Activated CD4-positive, alpha-beta T cell treated with anti-CD3 and anti-CD28 coated beads, Interleukin-2, amount 10 ng/mL, durations not matched to agents 24 days and 14 days (primary cell): ENCODE measurements at regions of chr1 and their contacts with region 1.

Region 1: DNA sequence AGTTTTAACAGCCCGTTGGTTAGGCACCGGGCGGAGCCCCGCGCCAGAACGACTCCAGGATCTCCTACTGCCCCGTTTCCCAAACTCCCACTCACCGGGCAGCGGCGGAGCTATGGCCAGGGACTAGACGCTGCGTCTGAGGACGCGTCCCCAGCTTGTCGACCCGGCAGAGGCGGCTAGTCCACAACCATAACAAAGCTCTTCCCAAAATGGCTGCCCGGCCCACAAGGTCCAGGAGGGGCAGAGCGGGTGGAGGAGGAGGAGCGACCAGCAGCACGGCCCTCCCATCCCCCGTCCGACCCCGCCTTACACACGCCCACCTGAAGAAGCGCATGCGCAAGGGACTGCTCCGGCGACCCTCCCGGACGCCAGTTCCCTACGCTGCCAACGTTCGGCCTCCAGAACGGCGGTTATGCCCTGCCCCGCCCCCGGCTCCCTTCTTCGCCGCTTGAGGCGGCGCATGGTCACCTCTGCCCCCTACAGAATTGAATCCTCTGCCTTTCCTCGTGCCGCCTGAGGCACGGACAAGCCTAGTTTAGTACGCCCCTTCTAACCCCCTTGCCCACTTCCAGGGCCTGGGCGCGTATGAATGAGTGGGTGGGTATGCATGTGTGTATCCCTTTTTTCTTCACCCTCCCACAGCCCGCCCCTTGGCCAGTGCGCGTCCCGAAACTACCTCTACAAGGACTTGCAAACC is at the start of gene GPBP1L1:
- DNase-seq: peak; percentile 99
- H3K4me3 Mint-ChIP-seq: peak within 1 kb of the TSS; percentile 98
- H3K27ac Mint-ChIP-seq: peak within 1 kb of the TSS; percentile 97
- H3K4me1 Mint-ChIP-seq: peaks cover 31% of the 10 kb centered on the region
- H3K27me3 Mint-ChIP-seq: no peaks in the 10 kb centered on the region
- total RNA-seq, gene GPBP1L1: 101 and 104 TPM in 2 replicates

Region 2: GRCh38 chr1:44721485-44722361 is 964.7 kb before region 1 on chr1:
- intact Hi-C with region 1: loop called (anchors 5 kb)
- DNase-seq: peak; percentile 94
- H3K4me3 Mint-ChIP-seq: peak overlapping the region; percentile 75
- H3K27ac Mint-ChIP-seq: peak overlapping the region; percentile 97
- H3K4me1 Mint-ChIP-seq: peaks cover 69% of the 10 kb centered on the region
- H3K27me3 Mint-ChIP-seq: no peaks in the 10 kb centered on the region

Region 3: DNA sequence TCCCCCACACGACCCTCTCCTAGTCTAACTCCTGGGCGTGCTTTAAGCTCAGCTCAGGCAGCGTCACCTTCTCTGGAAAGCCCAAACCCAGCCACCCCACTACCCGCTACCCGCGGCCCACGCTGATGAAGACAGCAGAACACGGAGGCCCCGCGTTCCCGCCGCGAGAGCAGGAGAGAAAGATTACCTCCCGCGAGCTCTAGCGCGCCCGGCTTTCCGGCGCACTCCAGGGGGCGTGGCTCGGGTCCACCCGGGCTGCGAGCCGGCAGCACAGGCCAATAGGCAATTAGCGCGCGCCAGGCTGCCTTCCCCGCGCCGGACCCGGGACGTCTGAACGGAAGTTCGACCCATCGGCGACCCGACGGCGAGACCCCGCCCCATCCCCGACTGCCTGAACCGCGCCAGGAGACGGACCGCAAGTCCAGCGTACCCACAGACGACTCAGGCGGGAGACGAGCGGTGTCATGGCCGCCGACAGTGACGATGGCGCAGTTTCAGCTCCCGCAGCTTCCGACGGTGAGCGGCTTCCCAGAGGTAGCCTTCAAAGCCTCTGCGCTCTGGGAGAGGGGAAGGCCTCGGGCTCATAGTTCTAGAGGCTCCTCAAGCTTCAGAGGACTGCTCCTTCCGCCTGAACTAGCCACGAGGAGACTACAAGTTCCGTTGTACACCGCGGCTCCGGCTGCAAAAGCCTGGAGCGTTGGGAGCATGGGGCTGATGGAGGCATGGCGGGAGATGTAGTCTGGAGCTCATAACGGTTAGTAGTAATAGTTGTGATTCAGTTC is 346.5 kb before region 1 on chr1 and contains the starts of genes MUTYH and TOE1:
- intact Hi-C with region 1: loop called (anchors 2 kb)
- DNase-seq: peak; percentile 98
- H3K4me3 Mint-ChIP-seq: peak within 1 kb of the TSS; percentile 98
- H3K27ac Mint-ChIP-seq: peak within 1 kb of the TSS; percentile 99
- H3K4me1 Mint-ChIP-seq: peaks cover 45% of the 10 kb centered on the region
- H3K27me3 Mint-ChIP-seq: no peaks in the 10 kb centered on the region
- total RNA-seq, gene MUTYH: 55.6 and 57.0 TPM in 2 replicates
- total RNA-seq, gene TOE1: 38.2 and 44.8 TPM in 2 replicates

Region 4: GRCh38 chr1:45521398-45522323 is 164.8 kb before region 1 on chr1 and contains the start of gene PRDX1:
- intact Hi-C with region 1: loop called (anchors 1 kb)
- DNase-seq: peak; percentile 99
- H3K4me3 Mint-ChIP-seq: peak within 1 kb of the TSS; percentile 99
- H3K27ac Mint-ChIP-seq: peak within 1 kb of the TSS; percentile 94
- H3K4me1 Mint-ChIP-seq: peaks cover 31% of the 10 kb centered on the region
- H3K27me3 Mint-ChIP-seq: peaks cover 2% of the 10 kb centered on the region
- total RNA-seq, gene PRDX1: 682 and 710 TPM in 2 replicates

Region 5: GRCh38 chr1:45803301-45803780 is 116.9 kb after region 1 on chr1 and contains the start of gene MAST2:
- intact Hi-C with region 1: loop called (anchors 1 kb)
- DNase-seq: peak; percentile 97
- H3K4me3 Mint-ChIP-seq: peak within 1 kb of the TSS; percentile 93
- H3K27ac Mint-ChIP-seq: peak within 1 kb of the TSS; percentile 78
- H3K4me1 Mint-ChIP-seq: peaks cover 28% of the 10 kb centered on the region
- H3K27me3 Mint-ChIP-seq: no peaks in the 10 kb centered on the region
- total RNA-seq, gene MAST2: 31.4 and 33.1 TPM in 2 replicates

Region 6: DNA sequence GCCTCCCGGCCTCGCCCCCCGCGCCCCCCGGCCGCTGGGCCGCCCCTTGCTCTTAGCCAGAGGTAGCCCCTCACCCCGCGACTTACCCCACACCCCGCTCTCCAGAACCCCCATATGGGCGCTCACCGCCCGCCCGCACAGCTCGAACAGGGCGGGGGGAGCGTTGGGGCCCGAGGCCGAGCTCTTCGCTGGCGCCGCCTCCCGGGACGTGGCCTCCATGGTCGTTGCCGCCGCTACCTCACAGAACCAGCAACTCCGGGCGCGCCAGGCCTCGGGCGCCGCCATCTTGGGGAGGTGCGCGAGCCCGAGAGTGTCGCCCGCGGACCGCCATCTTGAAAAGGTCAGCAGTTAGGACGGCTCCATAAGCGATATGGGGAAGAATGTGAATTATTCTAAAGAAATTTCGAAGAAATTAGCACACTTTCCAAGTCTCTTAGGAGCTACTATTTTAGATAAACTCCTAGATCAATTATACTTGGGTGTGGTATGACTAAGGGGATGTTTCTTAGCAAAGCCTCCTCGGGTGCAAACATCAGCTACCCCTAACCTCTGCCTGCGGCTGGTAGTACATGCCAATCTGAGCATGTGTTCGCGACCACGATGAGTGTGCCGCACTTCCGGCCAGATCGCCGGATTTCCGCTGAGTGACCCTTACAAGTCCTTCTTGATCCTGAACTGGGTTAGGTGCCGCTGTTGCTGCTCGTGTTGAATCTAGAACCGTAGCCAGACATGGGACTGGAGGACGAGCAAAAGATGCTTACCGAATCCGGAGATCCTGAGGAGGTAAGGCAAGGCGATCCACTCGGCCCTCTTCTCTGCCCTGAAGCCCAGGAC is 616.8 kb after region 1 on chr1 and contains the starts of genes LRRC41 and UQCRH:
- intact Hi-C with region 1: loop called (anchors 2 kb)
- DNase-seq: peak; percentile 98
- H3K4me3 Mint-ChIP-seq: peak within 1 kb of the TSS; percentile 99
- H3K27ac Mint-ChIP-seq: peak within 1 kb of the TSS; percentile 98
- H3K4me1 Mint-ChIP-seq: peaks cover 39% of the 10 kb centered on the region
- H3K27me3 Mint-ChIP-seq: no peaks in the 10 kb centered on the region
- total RNA-seq, gene LRRC41: 63.1 and 64.6 TPM in 2 replicates
- total RNA-seq, gene UQCRH: 283 and 306 TPM in 2 replicates